Caco-2 (cell line): ENCODE measurements at regions of chr20 and their contacts with region 1.

Region 1: GRCh38 chr20:49541733-49542513 is 26.0 kb downstream of the PTGIS start:
- DNase-seq: peak; percentile 88 to 89
- H3K4me3 ChIP-seq: no peak overlapping the region
- H3K4me3 Mint-ChIP-seq: no peak overlapping the region
- H3K27ac Mint-ChIP-seq: no peak overlapping the region
- H3K4me1 ChIP-seq: peaks cover 5% of the 10 kb centered on the region; the same call in 1 of the 2 replicates
- H3K4me1 Mint-ChIP-seq: peaks cover 11% of the 10 kb centered on the region
- H3K27me3 ChIP-seq: no peaks in the 10 kb centered on the region
- H3K27me3 Mint-ChIP-seq: no peaks in the 10 kb centered on the region
- CTCF ChIP-seq: peak; percentile 96 to 99

Region 2: DNA sequence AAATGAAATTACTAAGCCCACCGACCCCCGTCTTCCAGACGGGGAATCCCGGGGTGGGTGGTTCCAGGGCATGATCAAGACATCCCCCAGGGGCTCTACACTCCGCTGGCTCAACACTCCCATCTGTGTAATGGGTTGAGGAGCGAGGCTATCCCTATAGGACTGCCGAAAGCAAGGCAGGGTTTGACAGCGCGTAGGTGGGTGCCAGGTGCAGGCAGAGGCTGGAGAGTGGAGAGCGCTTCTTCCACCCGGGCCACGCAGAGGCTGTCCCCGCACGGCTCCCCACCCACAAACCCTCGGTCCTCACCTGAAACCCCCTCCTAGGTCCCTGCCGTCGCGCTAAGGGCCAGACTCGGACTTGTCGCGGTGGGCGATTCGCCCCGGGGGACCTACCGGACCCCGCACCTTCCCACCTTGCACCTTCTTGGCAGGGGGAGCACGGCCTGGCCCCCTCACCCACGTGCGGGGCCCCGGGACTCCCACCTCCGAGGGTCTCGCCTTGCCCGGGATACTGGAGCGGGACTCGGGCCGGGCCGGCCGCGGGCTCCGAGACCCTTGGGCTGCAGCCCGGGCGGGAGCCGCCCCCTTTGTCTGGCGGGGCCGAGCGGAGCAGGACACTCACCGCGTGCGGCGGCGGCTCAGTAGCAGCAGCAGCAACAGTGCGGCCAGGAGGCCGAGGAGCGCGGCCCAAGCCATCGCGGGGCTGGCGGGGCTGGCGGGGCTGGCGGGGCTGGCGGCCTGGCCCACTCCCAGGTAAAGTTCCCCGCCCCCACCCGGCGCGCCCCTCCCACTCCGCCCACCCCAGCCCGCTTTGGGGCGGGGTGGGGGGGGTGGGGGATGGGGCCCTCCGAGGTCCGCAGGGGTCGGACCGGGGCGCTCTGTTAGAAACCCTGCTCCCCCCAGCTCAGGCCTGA is 25.8 kb after region 1 on chr20 and contains the start of gene PTGIS:
- CTCF ChIA-PET with region 1: interaction called, 12 read pairs
- POLR2A ChIA-PET with region 1: no interaction called
- intact Hi-C with region 1: no loop called
- DNase-seq: peak; percentile 40
- H3K4me3 ChIP-seq: peak within 1 kb of the TSS; percentile 29
- H3K4me3 Mint-ChIP-seq: peak within 1 kb of the TSS; percentile 7
- H3K27ac Mint-ChIP-seq: no peak within 1 kb of the TSS
- H3K4me1 ChIP-seq: peaks cover 9% of the 10 kb centered on the region
- H3K4me1 Mint-ChIP-seq: peaks cover 24% of the 10 kb centered on the region
- H3K27me3 ChIP-seq: no peaks in the 10 kb centered on the region
- H3K27me3 Mint-ChIP-seq: no peaks in the 10 kb centered on the region
- CTCF ChIP-seq: no peak
- total RNA-seq, gene PTGIS: 1.9 and 2.7 TPM in 2 replicates

Region 3: DNA sequence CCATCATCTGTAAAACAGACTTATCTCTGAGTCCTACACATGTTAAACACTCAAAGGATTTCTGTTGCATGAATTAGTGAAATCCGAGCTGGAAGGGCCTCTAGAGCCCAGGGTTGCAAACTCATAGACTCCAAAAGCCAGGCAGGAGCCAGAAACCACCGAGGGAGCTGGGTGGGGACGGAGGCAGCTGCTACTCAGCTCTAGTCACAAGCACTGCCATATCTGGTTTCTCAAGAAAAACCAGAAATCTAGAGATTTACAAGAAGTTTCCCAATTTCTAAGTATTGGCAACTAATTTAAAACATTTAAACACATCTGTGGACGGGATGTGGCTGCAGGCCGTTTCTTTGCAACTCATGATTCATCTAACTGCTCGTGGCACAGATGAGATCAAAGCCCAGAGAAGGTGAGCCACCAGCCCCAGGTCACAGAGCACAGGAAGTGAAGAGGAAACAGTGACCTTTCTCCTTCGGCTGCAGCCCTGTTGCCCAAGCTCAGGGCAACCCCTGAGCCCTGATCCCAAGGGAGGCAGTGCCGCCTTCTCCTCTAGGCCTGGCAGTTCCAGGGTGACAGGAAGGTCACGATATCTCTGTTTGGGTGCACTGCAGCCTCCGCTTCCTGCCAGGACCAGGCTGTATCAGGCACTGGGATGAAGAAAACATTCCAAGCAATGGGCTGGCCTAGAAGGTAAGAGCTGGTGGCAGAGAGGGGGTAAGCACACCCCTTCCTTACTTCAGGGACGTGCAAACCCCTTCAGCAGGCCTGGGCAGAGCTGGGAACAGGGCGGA is 52.4 kb after region 1 on chr20:
- CTCF ChIA-PET with region 1: interaction called, 13 read pairs
- POLR2A ChIA-PET with region 1: no interaction called
- intact Hi-C with region 1: no loop called
- DNase-seq: peak in 1 of 2 experiments; percentile 55
- H3K4me3 ChIP-seq: no peak overlapping the region
- H3K4me3 Mint-ChIP-seq: no peak overlapping the region
- H3K27ac Mint-ChIP-seq: peak overlapping the region; percentile 16
- H3K4me1 ChIP-seq: peaks cover 28% of the 10 kb centered on the region
- H3K4me1 Mint-ChIP-seq: peaks cover 31% of the 10 kb centered on the region
- H3K27me3 ChIP-seq: no peaks in the 10 kb centered on the region
- H3K27me3 Mint-ChIP-seq: no peaks in the 10 kb centered on the region
- CTCF ChIP-seq: no peak

Region 4: DNA sequence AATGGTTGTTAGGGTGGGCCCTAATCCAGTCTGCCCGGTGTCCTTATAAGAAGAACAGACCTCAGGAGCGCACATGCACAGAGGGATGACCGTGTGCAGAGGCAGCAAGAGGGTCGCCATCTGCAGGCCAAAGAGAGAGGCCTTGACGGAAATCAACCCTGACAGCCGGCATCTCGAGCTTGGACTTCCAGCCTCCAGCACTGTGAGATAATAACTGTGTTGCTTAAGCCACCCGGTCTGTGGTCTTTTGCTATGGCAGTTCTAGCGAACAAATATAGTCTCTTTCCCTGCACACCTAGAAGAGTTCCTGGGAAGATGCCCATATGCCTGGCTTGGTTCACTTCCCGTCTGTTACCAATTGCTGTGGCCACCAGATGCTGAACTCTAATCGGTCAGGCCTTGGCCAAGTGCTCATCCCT is 61.3 kb after region 1 on chr20:
- CTCF ChIA-PET with region 1: interaction called, 572 read pairs
- POLR2A ChIA-PET with region 1: interaction called, 3 read pairs
- intact Hi-C with region 1: loop called (anchors 1 kb)
- DNase-seq: peak; percentile 81 to 88
- H3K4me3 ChIP-seq: no peak overlapping the region
- H3K4me3 Mint-ChIP-seq: no peak overlapping the region
- H3K27ac Mint-ChIP-seq: no peak overlapping the region
- H3K4me1 ChIP-seq: peaks cover 21% of the 10 kb centered on the region
- H3K4me1 Mint-ChIP-seq: peaks cover 28% of the 10 kb centered on the region
- H3K27me3 ChIP-seq: no peaks in the 10 kb centered on the region
- H3K27me3 Mint-ChIP-seq: no peaks in the 10 kb centered on the region
- CTCF ChIP-seq: peak; percentile 78 to 83

Region 5: GRCh38 chr20:49846206-49846807 is 304.4 kb after region 1 on chr20:
- CTCF ChIA-PET with region 1: interaction called, 6 read pairs
- POLR2A ChIA-PET with region 1: no interaction called
- intact Hi-C with region 1: loop called (anchors 2 kb)
- DNase-seq: peak; percentile 71 to 87
- H3K4me3 ChIP-seq: no peak overlapping the region
- H3K4me3 Mint-ChIP-seq: no peak overlapping the region
- H3K27ac Mint-ChIP-seq: no peak overlapping the region
- H3K4me1 ChIP-seq: no peaks in the 10 kb centered on the region
- H3K4me1 Mint-ChIP-seq: no peaks in the 10 kb centered on the region
- H3K27me3 ChIP-seq: no peaks in the 10 kb centered on the region
- H3K27me3 Mint-ChIP-seq: no peaks in the 10 kb centered on the region
- CTCF ChIP-seq: peak; percentile 87 to 92